Upper lobe of right lung (tissue), 1 donor: ENCODE measurements at regions of chr17 and their contacts with region 1.

Region 1: DNA sequence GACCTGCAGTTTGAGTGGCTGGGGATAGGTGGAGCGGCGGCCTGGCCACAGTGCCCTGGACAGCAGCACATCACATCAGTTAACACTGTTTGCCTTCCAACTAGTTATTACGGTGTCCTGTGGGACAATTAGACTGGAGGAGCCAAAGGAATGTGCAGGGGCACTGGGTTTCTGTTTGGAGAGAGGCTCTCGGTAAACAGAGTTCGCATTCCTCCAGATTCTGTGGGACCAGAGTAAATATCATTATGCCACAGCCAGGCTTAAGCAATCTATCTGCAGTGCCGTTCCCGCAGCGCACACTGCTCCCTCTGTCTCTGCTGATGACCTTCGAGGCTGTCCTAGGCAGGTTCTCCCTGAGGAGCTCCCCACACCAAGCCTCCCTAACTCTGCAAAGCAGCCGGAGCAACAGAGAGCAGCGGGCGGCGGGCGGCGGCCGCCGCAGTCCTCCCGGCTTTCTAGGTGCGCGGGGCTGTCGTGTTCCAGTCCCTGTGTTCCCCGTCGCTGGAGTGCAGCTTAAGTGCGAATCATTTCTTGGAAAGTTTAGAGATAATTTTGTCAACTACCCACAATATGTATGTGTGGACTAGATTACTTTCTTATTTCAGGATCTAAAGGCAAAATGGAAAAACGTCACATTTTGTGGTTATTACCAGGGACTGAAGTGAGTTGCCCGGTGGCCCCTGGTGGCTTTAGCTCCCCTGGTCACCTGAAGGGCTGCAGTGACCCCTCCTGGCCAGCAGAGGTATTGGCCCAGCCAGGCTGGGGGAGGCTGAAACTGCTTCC is 43.2 kb downstream of the PGS1 start:
- DNase-seq: peak; percentile 89
- ATAC-seq: peak; percentile 85
- H3K4me3 ChIP-seq: no peak overlapping the region
- H3K27ac ChIP-seq: no peak overlapping the region
- H3K4me1 ChIP-seq: peaks cover 54% of the 10 kb centered on the region
- H3K27me3 ChIP-seq: no peaks in the 10 kb centered on the region
- CTCF ChIP-seq: peak; percentile 99

Region 2: DNA sequence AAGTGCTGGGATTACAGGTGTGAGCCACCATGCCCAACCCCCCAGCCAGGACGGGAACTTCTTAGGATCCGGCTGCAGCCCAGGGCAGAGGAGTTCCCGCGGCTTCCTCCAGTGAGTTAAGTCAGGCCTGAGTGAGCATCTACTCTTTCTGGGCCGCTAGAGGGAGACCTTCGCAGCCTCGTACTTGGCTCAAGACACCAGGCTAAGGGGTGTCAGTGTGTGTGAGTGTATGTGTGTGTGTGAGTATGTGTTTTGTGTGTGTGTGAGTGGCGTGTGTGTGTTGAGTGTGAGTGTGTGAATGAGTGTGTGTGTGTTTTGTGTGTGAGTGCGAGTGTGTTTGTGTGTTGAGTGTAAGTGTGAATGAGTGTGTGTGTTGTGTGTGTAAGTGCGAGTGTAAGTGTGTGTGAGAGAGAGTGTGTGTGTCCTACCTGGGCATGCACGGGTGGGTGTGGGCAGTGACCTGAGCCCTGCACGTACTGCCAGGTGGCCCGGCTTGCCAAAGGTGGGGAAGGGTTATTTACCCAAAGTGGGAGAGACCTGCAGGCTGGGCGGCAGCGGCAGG is 131.8 kb before region 1 on chr17:
- intact Hi-C with region 1: loop called (anchors 5 kb)
- DNase-seq: peak; percentile 85
- ATAC-seq: peak; percentile 97
- H3K4me3 ChIP-seq: no peak overlapping the region
- H3K27ac ChIP-seq: no peak overlapping the region
- H3K4me1 ChIP-seq: peaks cover 10% of the 10 kb centered on the region
- H3K27me3 ChIP-seq: no peaks in the 10 kb centered on the region
- CTCF ChIP-seq: peak; percentile 76

Region 3: DNA sequence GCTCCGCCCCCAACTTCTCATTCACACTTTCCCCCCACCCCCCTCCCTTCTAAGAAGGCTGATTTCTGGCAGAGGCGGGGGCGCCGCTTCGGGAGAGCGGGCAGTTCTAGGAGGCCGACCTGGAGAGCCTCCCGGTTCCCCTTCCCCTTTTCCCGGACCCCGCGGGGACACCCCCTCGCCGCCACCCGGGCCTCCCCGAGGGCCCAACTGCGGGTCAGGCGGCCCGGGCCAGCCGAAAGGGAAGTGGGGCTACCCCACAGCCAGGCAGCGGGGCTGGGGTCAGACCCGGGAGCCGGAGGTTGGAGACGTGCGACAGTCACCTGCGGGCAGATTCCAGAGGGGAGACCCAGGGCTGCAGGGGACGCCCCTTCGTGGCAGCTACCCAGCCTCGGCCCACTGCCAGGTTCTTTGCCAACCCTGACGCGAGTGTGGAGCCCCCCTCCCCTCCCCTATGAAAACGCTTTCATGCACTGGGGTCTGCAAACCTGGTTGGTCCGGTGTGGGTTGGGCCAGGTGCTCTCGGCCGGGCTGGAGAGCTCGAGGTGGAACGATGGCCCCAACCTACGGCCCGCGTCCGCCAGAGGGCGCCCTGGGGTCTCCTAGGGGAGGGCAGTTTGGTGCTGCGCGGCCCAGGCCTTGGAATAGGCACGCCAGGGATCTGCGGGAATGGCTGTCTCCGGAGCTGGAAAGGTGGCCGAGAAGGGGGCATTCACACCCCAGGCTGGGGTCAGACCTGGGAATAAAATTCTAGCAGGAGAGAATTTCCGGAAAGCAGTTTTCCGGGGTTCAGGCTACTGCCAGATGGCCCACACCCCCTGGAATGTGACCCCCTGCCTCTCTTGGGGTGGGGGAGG is 61.1 kb before region 1 on chr17:
- intact Hi-C with region 1: loop called (anchors 5 kb)
- DNase-seq: peak; percentile 98
- ATAC-seq: peak; percentile 78
- H3K4me3 ChIP-seq: peak overlapping the region; percentile 63
- H3K27ac ChIP-seq: peak overlapping the region; percentile 96
- H3K4me1 ChIP-seq: peaks cover 51% of the 10 kb centered on the region
- H3K27me3 ChIP-seq: no peaks in the 10 kb centered on the region
- CTCF ChIP-seq: peak; percentile 95